Activated CD8-positive, alpha-beta memory T cell treated with anti-CD3 and anti-CD28 coated beads, Interleukin-2, amount 10 ng/mL, durations not matched to agents 7 days and 5 days (primary cell): ENCODE measurements at regions of chr3 and their contacts with region 1.

Region 1: DNA sequence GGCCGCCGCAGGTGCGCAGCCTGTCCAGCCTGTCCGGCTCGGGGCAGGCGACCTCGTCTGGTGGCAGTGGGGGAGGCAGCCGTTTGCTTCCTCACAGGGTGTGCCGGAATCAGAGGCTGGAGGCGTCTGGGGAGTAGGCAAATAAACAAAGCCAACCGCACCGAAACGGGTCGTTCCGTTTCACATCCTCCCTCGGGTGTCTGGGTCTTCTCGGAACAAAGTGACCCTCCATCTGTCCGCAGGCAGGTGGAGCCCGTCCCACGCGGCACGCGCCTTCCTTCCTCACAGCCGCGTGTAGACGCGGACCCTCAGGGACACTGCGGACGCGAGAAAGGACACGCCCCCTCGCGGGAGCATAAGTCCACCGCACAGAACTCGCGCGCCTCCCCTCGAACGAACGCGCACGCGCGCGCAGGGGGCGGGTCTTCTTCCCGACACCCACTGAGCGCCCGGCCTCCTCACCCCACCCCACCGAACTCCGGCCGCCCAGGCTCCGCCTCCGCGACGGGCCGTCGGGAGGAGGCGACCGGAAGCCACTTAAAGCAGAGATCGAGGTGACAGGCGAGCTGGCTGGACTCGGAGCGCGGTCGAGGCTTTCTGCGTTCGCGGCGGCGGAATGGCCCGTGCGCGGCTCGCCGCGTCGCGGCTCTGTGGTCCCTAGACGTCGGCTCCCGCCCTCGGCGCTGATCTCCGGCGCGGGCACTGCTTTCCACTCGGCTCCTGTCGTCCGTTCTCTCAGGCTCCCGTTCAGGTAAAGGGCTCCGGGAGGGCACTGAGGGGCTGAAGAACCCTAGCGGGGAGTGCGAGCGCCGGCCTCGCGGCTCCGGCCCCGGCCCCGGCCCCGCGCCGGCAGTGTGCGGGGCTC is at the start of gene TIPARP:
- DNase-seq: peak; percentile 99
- ATAC-seq: peak; percentile 83
- H3K4me3 Mint-ChIP-seq: peak within 1 kb of the TSS; percentile 96
- H3K27ac Mint-ChIP-seq: peak within 1 kb of the TSS; percentile 96
- H3K4me1 Mint-ChIP-seq: peaks cover 41% of the 10 kb centered on the region
- H3K27me3 Mint-ChIP-seq: no peaks in the 10 kb centered on the region
- total RNA-seq, gene TIPARP: 31.6 to 42.8 TPM

Region 2: GRCh38 chr3:156382458-156383346 is 291.6 kb before region 1 on chr3:
- CTCF ChIA-PET with region 1: no interaction called
- DNase-seq: no peak
- ATAC-seq: peak; percentile 42
- H3K4me3 Mint-ChIP-seq: no peak overlapping the region
- H3K27ac Mint-ChIP-seq: no peak overlapping the region
- H3K4me1 Mint-ChIP-seq: no peaks in the 10 kb centered on the region
- H3K27me3 Mint-ChIP-seq: peaks cover 43% of the 10 kb centered on the region

Region 3: DNA sequence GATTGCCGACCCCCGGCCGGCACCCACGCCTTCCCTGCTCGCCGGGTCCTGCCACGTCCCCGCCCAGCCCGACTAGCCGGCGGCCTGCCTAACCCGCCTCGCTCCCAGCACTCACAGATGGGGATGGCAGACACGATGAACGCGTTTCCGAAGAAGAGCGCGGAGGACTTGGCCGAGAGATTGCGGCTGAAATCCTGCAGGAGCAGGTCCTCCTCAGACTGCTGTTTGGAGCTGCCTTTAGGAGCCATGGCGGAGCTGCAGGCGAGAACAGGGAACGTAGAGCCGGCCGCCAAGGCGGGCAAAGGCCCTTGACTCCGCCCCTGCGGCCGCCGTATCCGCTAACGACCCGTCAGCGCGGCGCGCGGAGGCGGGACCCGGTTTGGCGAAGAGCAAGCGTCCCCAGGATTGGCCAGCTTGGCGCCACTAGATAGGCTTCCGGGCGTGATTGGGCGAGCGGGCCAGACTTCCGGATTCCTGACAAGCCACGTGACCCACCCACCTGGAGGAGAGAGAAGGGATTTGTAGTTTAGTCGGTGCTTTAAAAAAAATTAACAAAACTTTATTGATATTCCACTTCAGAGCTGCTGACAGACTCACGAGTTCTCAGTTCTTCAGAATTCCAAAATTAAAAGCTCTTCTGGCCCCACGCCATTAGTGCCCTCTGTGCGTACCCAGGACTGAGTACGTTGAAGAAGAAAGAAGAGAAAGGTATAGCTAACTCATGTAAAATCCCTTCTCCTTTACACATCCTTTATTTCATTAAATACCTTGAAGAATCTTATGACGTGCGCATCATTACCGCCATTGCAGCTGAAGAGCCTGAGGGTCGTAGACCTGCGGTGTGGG is 119.2 kb before region 1 on chr3 and contains the start of gene SSR3:
- CTCF ChIA-PET with region 1: interaction called, 53 read pairs
- DNase-seq: peak; percentile 99
- ATAC-seq: peak; percentile 100
- H3K4me3 Mint-ChIP-seq: peak within 1 kb of the TSS; percentile 94
- H3K27ac Mint-ChIP-seq: peak within 1 kb of the TSS; percentile 92
- H3K4me1 Mint-ChIP-seq: peaks cover 45% of the 10 kb centered on the region
- H3K27me3 Mint-ChIP-seq: no peaks in the 10 kb centered on the region
- total RNA-seq, gene SSR3: 121 to 147 TPM

Region 4: DNA sequence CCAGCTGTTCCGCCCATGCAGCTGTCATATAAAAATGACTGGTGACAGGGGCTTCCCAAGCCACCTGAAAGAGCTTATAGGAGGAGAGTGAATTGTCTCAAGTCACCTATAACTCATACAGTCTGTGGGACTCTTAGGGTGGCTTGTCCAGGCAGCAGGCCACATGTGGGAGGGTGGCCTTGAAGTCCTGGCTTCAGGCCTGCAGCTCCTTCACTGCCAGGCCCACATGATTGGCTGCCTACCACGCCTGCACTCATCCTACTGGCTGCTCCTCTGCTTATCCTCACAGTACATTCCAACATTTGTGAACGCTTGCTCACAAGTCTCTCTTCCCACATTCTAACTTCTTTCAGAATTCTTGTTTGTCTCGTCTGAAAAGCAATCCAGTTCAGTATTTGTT is 40.9 kb before region 1 on chr3:
- CTCF ChIA-PET with region 1: no interaction called
- DNase-seq: no peak
- ATAC-seq: no peak
- H3K4me3 Mint-ChIP-seq: no peak overlapping the region
- H3K27ac Mint-ChIP-seq: no peak overlapping the region
- H3K4me1 Mint-ChIP-seq: no peaks in the 10 kb centered on the region
- H3K27me3 Mint-ChIP-seq: peaks cover 3% of the 10 kb centered on the region

Region 5: GRCh38 chr3:156685198-156685597 is 10.9 kb after region 1 on chr3:
- CTCF ChIA-PET with region 1: interaction called, 10 read pairs
- DNase-seq: no peak
- ATAC-seq: no peak
- H3K4me3 Mint-ChIP-seq: peak overlapping the region; percentile 15
- H3K27ac Mint-ChIP-seq: peak overlapping the region; percentile 63
- H3K4me1 Mint-ChIP-seq: peaks cover 85% of the 10 kb centered on the region
- H3K27me3 Mint-ChIP-seq: no peaks in the 10 kb centered on the region

Region 6: DNA sequence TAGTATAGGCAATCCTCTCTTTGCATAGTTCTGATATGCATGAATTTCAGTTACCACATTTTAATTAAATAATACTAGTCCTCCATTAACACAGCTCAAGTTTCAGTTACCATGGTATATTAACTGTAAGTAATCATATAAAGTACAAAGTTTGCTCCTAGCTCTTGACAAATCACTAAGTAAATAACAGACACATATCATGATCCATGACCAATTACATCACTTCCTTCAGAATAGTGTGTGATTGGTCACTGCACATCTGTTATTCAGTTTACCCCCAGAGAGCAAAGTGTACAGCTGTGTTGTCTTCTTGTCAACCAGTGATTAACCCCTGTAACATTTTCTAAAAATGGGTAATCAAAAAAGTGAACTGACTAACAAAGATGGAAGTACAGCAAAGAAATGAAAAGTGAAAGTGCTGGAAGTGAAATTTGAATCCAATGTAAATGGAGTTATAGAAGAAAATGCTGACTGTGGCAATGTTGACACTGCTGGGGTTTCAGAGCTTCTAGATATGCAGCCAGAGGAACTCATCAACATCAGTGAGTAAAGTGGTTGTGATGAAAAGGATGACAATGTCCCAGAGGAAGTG is 121.7 kb after region 1 on chr3:
- CTCF ChIA-PET with region 1: no interaction called
- DNase-seq: no peak
- ATAC-seq: no peak
- H3K4me3 Mint-ChIP-seq: no peak overlapping the region
- H3K27ac Mint-ChIP-seq: no peak overlapping the region
- H3K4me1 Mint-ChIP-seq: peaks cover 30% of the 10 kb centered on the region
- H3K27me3 Mint-ChIP-seq: no peaks in the 10 kb centered on the region

Region 7: GRCh38 chr3:157081681-157082210 is 407.5 kb after region 1 on chr3:
- CTCF ChIA-PET with region 1: interaction called, 32 read pairs
- DNase-seq: peak; percentile 91
- ATAC-seq: peak; percentile 95
- H3K4me3 Mint-ChIP-seq: no peak overlapping the region
- H3K27ac Mint-ChIP-seq: peak overlapping the region; percentile 38
- H3K4me1 Mint-ChIP-seq: peaks cover 40% of the 10 kb centered on the region
- H3K27me3 Mint-ChIP-seq: no peaks in the 10 kb centered on the region

Region 8: DNA sequence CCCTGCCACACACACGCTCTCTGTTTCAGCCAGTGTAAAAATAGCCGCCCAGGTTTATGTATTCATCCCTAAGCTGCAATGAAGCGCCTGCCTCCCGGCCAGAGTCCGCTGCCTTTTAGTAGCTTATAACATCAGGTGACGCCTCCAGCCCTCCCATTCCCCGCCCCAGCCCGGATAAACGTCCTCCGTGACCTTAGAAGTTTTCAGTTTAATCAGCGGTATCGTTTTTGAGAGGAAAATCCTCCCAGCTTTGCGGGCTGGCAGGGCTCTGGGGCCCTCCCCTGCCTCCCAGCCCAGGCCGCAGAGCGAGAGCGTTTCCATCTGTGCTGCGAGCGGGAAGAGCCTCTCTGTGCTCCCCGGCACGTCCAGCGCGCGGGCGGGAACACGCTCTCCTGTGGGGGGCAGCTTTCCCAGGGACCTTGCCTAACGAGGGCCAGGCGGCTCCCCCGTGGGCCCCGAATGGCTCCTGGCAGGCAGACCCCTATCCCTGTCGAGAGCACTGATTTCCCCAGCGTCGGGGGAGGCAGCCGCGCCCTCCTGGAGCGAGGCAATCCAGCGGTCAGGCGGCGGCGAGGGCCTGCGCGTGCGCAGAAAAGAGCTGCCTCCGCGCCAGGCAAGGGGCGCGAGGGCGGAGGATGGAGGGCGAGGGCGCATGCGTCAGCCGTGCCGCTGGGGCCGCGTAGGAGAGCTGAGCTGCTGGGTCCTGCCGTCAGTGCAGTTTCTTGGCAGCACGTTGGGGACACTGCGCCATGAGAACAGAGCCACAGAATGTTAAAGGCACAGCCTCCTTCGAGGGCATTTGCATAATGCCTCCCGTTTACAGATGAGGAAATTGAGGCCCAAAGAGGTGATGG is 414.6 kb after region 1 on chr3:
- CTCF ChIA-PET with region 1: interaction called, 10 read pairs
- DNase-seq: peak; percentile 97
- ATAC-seq: peak; percentile 92
- H3K4me3 Mint-ChIP-seq: peak overlapping the region; percentile 74
- H3K27ac Mint-ChIP-seq: peak overlapping the region; percentile 96
- H3K4me1 Mint-ChIP-seq: peaks cover 68% of the 10 kb centered on the region
- H3K27me3 Mint-ChIP-seq: no peaks in the 10 kb centered on the region